ENCODE measurements at regions of chr17 and their contacts with region 1.

Region 1: DNA sequence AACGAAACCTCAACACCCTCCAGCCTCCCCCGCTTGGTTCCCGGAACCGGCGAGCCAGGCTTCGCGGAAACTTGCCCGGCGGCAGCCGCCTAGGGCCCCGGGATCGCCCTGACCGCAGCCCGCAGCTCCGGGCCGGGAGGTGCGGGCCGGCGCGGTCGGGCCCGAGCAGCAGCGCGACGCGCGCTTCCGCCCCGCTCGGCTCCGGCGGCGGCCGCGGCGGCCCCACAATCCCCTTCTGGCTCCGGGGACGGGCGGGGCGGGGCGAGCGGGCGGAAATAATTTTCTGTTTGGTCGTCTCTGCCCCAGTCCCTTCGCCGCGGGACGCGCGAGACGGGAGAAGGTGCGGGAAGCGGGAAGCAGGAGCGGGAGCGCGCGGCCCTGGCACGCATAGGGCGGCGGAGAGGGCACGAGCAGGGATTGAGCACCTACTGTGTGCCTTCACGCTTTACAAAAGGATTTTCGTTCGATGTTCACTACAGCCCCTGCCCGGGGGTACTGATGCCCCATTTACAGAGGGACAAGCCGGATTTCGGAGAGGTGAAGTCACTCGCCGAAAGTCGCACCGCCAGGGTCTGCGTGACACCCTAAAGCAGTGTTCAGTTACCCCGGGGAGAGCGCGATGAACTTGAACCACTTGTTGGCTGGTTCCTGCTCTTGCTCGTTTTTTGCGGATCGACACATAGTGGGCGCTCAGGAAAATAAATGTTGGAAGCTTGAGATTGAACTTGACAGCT is 2.7 kb upstream of the MLLT6 start:
- DNase-seq: peak; percentile 92
- ATAC-seq: peak; percentile 42
- H3K4me3 ChIP-seq: peak overlapping the region; percentile 76 to 95 (median 93)
- H3K4me3 Mint-ChIP-seq: peak overlapping the region; percentile 99
- H3K27ac ChIP-seq: peak overlapping the region; percentile 91 to 97
- H3K27ac Mint-ChIP-seq: peak overlapping the region; percentile 99
- H3K4me1 ChIP-seq: peaks cover 17 to 51% of the 10 kb centered on the region in 2 donors
- H3K4me1 Mint-ChIP-seq: peaks cover 50% of the 10 kb centered on the region
- H3K27me3 ChIP-seq: no peaks in the 10 kb centered on the region
- H3K27me3 Mint-ChIP-seq: no peaks in the 10 kb centered on the region
- CTCF ChIP-seq: no peak

Region 2: DNA sequence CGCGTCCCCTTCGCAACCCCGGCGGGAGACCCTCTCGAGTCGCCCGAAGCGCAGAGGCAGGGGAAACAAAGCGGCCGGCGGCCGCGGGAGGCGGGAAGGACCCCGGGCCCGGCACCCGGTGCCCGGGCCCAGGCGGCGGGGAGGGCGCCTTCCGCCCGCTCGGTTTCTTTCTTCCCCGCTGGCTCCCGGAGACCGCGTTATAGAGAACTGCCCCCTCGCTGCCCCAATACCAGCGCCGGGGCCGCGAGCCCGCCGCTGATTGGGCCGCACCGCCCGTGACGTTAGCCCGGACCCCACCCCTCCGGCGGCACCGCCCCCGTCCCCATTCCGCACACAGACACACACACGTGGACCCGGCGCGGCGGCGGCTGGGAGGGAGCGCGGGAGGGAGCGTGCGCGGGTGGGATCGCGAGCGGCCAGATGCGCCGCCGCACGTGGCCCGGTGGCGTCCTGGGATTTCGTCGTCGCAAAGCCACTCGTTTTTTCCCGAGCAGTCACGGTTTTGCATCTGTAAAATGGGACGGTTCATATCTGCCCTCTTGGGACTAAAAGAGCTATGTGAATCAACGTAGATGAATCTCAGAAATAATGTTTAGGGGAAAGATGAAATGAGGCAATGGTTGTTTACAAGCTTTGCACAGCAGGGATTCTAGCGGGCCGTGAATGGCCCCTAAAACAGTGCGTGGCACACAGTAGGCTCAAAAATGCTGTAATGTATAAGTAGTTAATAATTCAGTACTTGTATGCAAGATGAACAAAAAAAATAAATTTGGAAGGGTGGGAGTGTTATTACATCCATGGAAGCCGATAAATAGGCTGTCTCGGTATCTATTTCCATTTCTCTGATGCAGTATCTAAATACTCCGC is 27.4 kb before region 1 on chr17 and contains the start of gene EPOP:
- CTCF ChIA-PET with region 1: interaction called, 7 read pairs
- POLR2A ChIA-PET with region 1: interaction called, 4 read pairs
- intact Hi-C with region 1: loop called (anchors 1 kb)
- DNase-seq: peak; percentile 85
- ATAC-seq: peak; percentile 85
- H3K4me3 ChIP-seq: peak within 1 kb of the TSS; percentile 16 to 68 (median 56)
- H3K4me3 Mint-ChIP-seq: peak within 1 kb of the TSS; percentile 87
- H3K27ac ChIP-seq: no peak within 1 kb of the TSS
- H3K27ac Mint-ChIP-seq: peak within 1 kb of the TSS; percentile 63
- H3K4me1 ChIP-seq: peaks cover 27 to 40% of the 10 kb centered on the region in 2 donors
- H3K4me1 Mint-ChIP-seq: peaks cover 29% of the 10 kb centered on the region
- H3K27me3 ChIP-seq: peaks cover 0 to 52% (median 26%) of the 10 kb centered on the region in 4 experiments
- H3K27me3 Mint-ChIP-seq: peaks cover 38% of the 10 kb centered on the region
- CTCF ChIP-seq: no peak
- total RNA-seq, gene EPOP: 0.97 and 1.2 TPM in 2 replicates

Region 3: DNA sequence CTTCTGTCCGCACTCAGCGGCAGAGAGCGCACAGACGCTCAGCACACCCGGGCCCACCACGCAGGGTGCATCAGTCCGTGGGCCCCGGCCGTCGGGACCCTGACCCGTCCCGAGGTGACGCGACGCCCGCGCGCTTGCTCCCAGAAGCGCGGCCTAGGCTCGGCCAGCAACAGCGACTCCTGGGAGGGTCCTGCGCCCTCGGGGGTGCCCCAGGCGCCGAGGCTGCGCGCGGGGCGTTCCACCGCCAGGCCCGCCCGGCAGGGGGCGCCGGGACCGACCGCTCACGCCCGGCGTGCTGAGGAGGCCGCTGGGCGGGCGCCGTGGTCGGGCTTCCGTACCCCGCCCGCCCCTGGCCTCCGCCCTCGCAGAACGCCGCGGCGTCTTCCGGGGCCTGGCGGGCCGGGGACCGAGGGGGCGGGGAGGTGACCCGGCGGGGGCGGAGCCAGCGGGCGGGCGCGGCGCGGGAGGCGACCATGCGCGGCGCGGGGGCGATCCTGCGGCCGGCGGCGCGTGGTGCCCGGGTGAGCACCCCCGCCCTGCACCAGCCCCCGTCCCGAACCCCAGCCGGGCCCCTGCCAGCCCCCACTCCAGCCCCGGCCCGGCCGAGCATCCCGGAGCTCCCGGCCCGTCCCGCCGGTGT is 27.7 kb after region 1 on chr17 and contains the start of gene CISD3:
- CTCF ChIA-PET with region 1: interaction called, 32 read pairs
- POLR2A ChIA-PET with region 1: interaction called, 15 read pairs
- intact Hi-C with region 1: loop called (anchors 1 kb)
- DNase-seq: peak; percentile 92
- ATAC-seq: peak; percentile 91
- H3K4me3 ChIP-seq: peak within 1 kb of the TSS; percentile 13 to 85 (median 62)
- H3K4me3 Mint-ChIP-seq: peak within 1 kb of the TSS; percentile 87
- H3K27ac ChIP-seq: peak within 1 kb of the TSS; percentile 79
- H3K27ac Mint-ChIP-seq: peak within 1 kb of the TSS; percentile 89
- H3K4me1 ChIP-seq: peaks cover 32 to 60% of the 10 kb centered on the region in 2 donors
- H3K4me1 Mint-ChIP-seq: peaks cover 59% of the 10 kb centered on the region
- H3K27me3 ChIP-seq: no peaks in the 10 kb centered on the region
- H3K27me3 Mint-ChIP-seq: no peaks in the 10 kb centered on the region
- CTCF ChIP-seq: peak; percentile 71
- total RNA-seq, gene CISD3: 11.3 TPM in 2 replicates

Region 4: DNA sequence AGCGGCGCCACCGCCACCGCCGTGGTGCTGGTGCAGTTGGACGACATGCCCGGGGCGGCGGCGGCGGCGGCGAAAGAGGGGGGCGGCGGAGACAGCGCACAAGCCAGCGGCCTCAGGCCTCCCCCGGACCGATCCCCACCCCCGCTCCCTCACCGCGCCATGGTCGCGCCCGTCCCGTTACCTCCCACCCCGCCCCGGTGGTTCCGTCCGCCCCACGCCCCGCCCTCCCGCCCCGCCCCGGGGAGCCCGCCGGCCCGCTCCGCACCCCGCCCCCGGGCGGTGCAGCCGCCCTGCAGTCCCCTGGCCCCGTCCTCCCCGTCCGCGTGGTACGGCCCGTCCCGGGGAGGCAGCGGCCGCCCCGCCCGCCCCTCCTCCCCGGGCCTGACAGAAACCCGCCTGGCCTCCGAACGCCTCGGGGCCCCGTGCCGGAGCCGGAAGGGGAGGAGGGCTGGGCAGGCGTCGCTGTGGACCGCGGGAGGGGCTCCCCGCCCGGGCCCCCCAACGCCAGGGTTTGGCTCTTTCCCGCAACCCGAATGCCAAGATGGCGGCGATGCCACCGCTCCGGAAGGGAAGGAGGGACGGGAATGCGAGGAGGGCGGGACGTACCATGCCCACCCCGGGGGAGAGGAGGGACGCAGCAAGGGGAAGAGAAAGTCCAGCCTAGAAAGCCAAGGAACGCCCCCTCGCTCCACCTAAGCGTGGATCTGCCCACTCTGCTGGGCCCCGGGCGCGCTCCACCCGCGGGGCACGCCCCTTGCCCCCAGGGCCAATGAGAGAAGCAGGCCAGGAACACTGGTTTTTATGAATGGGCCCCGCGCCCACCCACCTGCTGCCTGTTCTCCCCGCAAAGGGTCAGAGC is 97.3 kb after region 1 on chr17 and contains the start of gene PIP4K2B:
- CTCF ChIA-PET with region 1: no interaction called
- POLR2A ChIA-PET with region 1: no interaction called
- intact Hi-C with region 1: loop called (anchors 2 kb)
- DNase-seq: peak; percentile 94
- ATAC-seq: peak; percentile 84
- H3K4me3 ChIP-seq: peak within 1 kb of the TSS; percentile 64 to 88 (median 75)
- H3K4me3 Mint-ChIP-seq: peak within 1 kb of the TSS; percentile 99
- H3K27ac ChIP-seq: peak within 1 kb of the TSS; percentile 72 to 79
- H3K27ac Mint-ChIP-seq: peak within 1 kb of the TSS; percentile 96
- H3K4me1 ChIP-seq: peaks cover 17 to 25% of the 10 kb centered on the region in 2 donors
- H3K4me1 Mint-ChIP-seq: peaks cover 34% of the 10 kb centered on the region
- H3K27me3 ChIP-seq: no peaks in the 10 kb centered on the region
- H3K27me3 Mint-ChIP-seq: no peaks in the 10 kb centered on the region
- CTCF ChIP-seq: no peak
- total RNA-seq, gene PIP4K2B: 42.9 and 46.8 TPM in 2 replicates

Region 5: GRCh38 chr17:38815576-38816193 is 113.4 kb after region 1 on chr17:
- CTCF ChIA-PET with region 1: no interaction called
- POLR2A ChIA-PET with region 1: no interaction called
- intact Hi-C with region 1: no loop called
- DNase-seq: no peak
- ATAC-seq: no peak
- H3K4me3 ChIP-seq: no peak overlapping the region
- H3K4me3 Mint-ChIP-seq: no peak overlapping the region
- H3K27ac ChIP-seq: no peak overlapping the region
- H3K27ac Mint-ChIP-seq: no peak overlapping the region
- H3K4me1 ChIP-seq: no peaks in the 10 kb centered on the region
- H3K4me1 Mint-ChIP-seq: peaks cover 3% of the 10 kb centered on the region
- H3K27me3 ChIP-seq: no peaks in the 10 kb centered on the region
- H3K27me3 Mint-ChIP-seq: no peaks in the 10 kb centered on the region
- CTCF ChIP-seq: peak; percentile 25

Measured in B cell (primary cell).